Mammary epithelial cell (primary cell): ENCODE measurements at regions of chr20 and their contacts with region 1.

Region 1: DNA sequence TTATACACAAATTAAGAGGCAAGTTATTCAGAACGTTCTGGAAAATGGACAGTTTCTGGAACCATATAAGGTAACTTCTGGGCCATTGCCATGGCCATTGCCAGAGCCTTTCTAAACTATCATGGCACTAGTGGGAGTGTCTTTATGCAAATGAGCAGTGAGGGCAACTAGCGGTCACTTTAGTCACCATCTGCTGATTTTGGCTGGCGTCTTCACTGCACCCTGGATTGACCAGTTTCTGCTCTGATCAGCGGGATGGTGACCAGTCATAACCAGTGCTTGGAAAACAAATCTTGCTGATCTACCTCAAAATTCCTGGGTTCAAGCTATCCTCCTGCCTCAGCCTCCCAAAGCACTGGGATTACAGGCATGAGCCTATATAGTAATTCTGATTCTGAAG is 7.3 kb upstream of the SNTA1 start:
- DNase-seq: peak; percentile 19
- H3K4me3 ChIP-seq: no peak overlapping the region
- H3K27ac ChIP-seq: no peak overlapping the region
- H3K4me1 ChIP-seq: no peaks in the 10 kb centered on the region
- H3K27me3 ChIP-seq: no peaks in the 10 kb centered on the region
- CTCF ChIP-seq: no peak

Region 2: DNA sequence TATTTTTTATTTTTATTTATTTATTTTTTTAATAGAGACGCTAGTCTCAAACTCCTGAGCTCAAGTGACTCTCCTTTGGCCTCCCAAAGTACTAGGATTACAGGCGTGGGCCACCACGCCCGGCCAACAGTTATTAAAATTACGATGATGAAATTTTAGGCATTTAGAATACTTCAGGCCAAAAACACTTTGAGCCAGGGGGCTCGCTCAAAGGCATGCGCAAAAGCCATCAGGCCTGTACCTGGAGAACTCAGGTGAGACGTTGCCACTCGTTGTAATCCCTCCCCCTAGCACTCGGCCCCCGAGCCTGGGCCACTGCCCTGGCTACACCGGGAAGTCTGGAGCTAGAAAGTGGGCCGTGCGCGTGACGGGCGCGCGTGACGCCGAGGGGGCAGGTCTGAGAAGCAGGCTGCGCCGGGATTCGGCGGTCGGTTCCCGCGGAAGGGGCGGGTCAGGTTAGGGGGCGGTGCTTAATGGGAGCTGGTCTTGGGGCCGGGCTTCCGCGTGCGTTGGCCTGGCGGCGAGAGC is 38.7 kb after region 1 on chr20:
- CTCF ChIA-PET with region 1: interaction called, 10 read pairs
- dilution Hi-C with region 1: no loop called
- in situ Hi-C with region 1: no loop called
- intact Hi-C with region 1: no loop called
- DNase-seq: peak; percentile 96
- H3K4me3 ChIP-seq: peak overlapping the region; percentile 33 to 46 (median 36)
- H3K27ac ChIP-seq: peak overlapping the region; percentile 78
- H3K4me1 ChIP-seq: no peaks in the 10 kb centered on the region
- H3K27me3 ChIP-seq: no peaks in the 10 kb centered on the region
- CTCF ChIP-seq: no peak

Region 3: GRCh38 chr20:33653218-33653899 is 202.5 kb after region 1 on chr20:
- CTCF ChIA-PET with region 1: no interaction called
- dilution Hi-C with region 1: no loop called
- in situ Hi-C with region 1: loop called in 1 of 2 experiments (anchors 10 kb)
- intact Hi-C with region 1: loop called (anchors 2 kb)
- DNase-seq: peak; percentile 34
- H3K4me3 ChIP-seq: no peak overlapping the region
- H3K27ac ChIP-seq: no peak overlapping the region
- H3K4me1 ChIP-seq: peaks cover 2% of the 10 kb centered on the region
- H3K27me3 ChIP-seq: no peaks in the 10 kb centered on the region
- CTCF ChIP-seq: peak; percentile 82

Region 4: GRCh38 chr20:33666293-33667244 is 215.7 kb after region 1 on chr20 and contains the start of gene ACTL10:
- CTCF ChIA-PET with region 1: no interaction called
- dilution Hi-C with region 1: no loop called
- in situ Hi-C with region 1: loop called in 1 of 2 experiments (anchors 10 kb)
- intact Hi-C with region 1: loop called (anchors 2 kb)
- DNase-seq: peak; percentile 76
- H3K4me3 ChIP-seq: peak within 1 kb of the TSS; percentile 26 to 52 (median 50)
- H3K27ac ChIP-seq: no peak within 1 kb of the TSS
- H3K4me1 ChIP-seq: peaks cover 31% of the 10 kb centered on the region
- H3K27me3 ChIP-seq: no peaks in the 10 kb centered on the region
- CTCF ChIP-seq: peak in 1 of 2 donors; percentile 17
- total RNA-seq, gene ACTL10: 1.4 to 2.7 TPM

Region 5: DNA sequence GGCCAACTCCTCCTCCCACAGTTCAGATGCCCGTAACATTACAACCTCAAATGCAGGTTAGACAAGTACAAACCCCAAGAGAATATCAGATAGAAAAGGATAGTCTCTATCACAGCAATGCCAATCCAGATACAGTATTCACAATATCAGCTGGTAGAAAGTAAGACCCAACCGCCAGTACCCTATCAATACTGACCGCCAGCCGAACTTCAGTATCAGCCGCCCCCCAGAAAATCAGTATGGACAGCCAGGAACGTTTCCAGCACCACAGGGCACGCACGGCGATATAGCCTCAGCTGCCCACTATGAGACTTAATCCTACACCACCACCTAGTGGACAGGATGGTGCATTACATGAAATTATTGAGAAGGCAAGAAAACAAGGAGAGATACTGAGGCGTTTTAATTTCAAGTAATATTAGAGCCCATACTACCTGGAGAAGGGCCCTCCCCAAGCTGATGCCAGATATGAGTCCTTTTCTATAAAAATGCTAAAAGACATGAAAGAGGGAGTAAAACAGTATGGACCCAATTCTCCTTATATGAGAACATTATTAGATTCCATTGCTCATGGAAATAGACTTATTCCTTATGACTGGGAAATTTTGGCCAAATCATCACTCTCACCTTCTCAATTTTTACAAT is 678.8 kb after region 1 on chr20:
- CTCF ChIA-PET with region 1: no interaction called
- dilution Hi-C with region 1: no loop called
- in situ Hi-C with region 1: no loop called
- intact Hi-C with region 1: loop called (anchors 2 kb)
- DNase-seq: peak; percentile 64
- H3K4me3 ChIP-seq: no peak overlapping the region
- H3K27ac ChIP-seq: no peak overlapping the region
- H3K4me1 ChIP-seq: peaks cover under 1% of the 10 kb centered on the region
- H3K27me3 ChIP-seq: no peaks in the 10 kb centered on the region
- CTCF ChIP-seq: peak; percentile 83 to 85